Activated B cell treated with CpG ODN at 0.5 μM for 24 hours (primary cell): ENCODE measurements at regions of chr6 and their contacts with region 1.

Region 1: GRCh38 chr6:45714741-45715507 is 300.7 kb downstream of the CLIC5 start:
- DNase-seq: no peak
- ATAC-seq: peak; percentile 40
- H3K4me3 Mint-ChIP-seq: no peak overlapping the region
- H3K27ac Mint-ChIP-seq: no peak overlapping the region
- H3K4me1 Mint-ChIP-seq: peaks cover 29% of the 10 kb centered on the region
- H3K27me3 Mint-ChIP-seq: no peaks in the 10 kb centered on the region
- CTCF ChIP-seq: no peak

Region 2: DNA sequence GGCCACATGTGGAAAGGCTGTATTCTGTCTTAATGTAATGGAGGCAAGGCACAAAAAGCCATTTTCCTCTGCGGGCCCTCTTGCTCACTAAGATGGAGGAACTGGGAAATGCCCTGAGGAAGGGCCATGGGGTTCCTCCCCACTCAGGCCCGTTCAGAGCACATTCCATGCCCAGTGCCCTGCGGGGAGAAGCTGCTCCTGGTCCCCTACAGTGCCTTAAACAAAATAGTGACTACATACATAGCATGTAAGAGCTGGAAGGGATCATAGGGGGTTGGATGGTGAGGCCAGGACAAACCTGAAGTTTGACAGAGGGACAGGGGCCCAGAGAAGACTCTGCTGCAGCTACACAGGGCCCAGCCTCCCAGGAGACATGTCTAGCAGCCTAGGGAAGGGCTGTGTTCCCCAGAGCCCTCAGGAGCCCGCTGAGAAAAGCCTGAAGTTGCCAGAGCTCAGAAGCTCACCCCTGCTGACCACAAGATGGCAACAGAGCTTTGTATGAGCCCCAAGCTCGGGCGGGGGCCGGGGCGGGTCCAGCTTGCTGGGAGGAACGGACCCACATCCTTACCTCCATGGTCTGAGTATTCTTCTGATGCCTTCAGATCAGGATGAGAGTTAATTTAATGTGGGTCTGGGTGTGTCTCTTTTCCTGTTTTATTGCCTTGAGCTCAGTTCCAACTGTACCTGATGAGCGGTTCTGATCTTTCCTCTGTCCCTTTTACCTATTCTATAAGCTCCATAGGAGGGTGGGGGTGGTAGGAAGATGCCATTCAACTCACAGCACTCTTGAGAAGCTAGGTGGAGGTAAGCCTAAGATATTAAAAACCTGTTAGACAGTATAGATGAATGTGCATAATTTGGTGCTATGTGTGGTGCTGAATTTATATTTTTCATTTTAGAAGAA is 1084.5 kb before region 1 on chr6:
- CTCF ChIA-PET with region 1: interaction called, 12 read pairs
- POLR2A ChIA-PET with region 1: no interaction called
- intact Hi-C with region 1: no loop called
- DNase-seq: no peak
- ATAC-seq: no peak
- H3K4me3 Mint-ChIP-seq: no peak overlapping the region
- H3K27ac Mint-ChIP-seq: no peak overlapping the region
- H3K4me1 Mint-ChIP-seq: peaks cover 2% of the 10 kb centered on the region
- H3K27me3 Mint-ChIP-seq: peaks cover 10% of the 10 kb centered on the region
- CTCF ChIP-seq: no peak

Region 3: DNA sequence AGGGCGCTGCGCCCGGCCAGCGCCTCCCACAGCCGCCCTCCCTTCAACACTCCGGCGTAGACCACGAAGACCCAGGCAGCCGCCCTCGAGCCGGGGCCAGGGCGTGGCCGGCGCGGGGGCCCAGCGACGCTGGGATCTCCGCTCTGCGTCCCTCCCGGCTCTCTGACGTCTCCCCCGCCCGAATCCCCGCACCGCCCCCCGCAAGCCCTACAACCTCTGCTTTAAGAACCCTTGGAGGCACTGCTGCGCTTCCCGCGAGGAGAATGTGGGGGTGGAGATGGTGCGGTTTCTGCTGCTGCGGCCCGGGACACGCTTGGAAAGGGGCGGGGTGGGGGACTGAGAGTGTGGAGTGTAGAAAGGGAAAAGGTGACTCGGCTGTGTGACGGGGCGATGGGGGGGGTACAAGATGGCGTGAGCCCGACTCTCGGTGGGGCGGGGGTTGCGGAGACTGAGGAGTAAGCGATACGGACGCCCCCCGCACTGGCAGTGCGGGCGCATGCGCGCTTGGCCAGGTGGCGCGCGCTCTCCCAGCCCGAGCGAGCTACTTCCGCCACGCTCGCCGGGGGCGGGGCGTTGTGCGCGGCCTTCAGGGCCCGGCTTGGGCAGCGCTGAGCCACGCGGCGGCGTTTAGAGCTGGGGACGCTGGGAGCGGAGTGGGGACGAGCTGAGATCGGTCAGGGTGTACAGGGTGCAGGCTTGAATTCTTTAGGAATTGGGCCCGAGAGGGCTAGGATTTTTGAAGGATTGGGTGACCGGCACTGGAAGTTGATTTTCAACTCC is 337.2 kb before region 1 on chr6 and contains the start of gene SUPT3H:
- CTCF ChIA-PET with region 1: interaction called, 11 read pairs
- POLR2A ChIA-PET with region 1: interaction called, 9 read pairs
- intact Hi-C with region 1: loop called (anchors 1 kb)
- DNase-seq: peak; percentile 91
- ATAC-seq: peak; percentile 79
- H3K4me3 Mint-ChIP-seq: peak within 1 kb of the TSS; percentile 99
- H3K27ac Mint-ChIP-seq: peak within 1 kb of the TSS; percentile 99
- H3K4me1 Mint-ChIP-seq: peaks cover 26% of the 10 kb centered on the region
- H3K27me3 Mint-ChIP-seq: no peaks in the 10 kb centered on the region
- CTCF ChIP-seq: no peak
- total RNA-seq, gene SUPT3H: 9.9 and 10.4 TPM in 2 replicates

Region 4: DNA sequence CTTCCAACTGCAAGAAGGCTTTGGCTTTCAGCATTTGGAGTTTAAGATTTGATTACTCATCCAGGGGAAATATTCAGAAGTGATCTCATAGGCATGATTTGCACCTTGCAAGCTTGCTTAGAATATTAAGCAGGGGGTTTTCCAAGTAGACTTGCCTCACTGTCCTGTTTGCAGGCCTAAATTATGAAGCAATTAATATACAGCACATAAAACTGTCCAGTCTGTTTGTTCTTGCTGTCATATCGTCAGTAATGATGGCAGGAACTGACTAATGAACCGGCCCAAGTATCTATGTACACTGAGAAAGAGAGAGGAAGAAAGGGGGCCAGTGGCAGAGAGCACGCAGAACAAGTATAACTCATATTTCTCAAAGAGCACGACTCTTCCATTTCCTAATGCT is 124.7 kb before region 1 on chr6:
- CTCF ChIA-PET with region 1: no interaction called
- POLR2A ChIA-PET with region 1: no interaction called
- intact Hi-C with region 1: loop called (anchors 10 kb)
- DNase-seq: no peak
- ATAC-seq: no peak
- H3K4me3 Mint-ChIP-seq: no peak overlapping the region
- H3K27ac Mint-ChIP-seq: no peak overlapping the region
- H3K4me1 Mint-ChIP-seq: peaks cover 25% of the 10 kb centered on the region
- H3K27me3 Mint-ChIP-seq: no peaks in the 10 kb centered on the region
- CTCF ChIP-seq: no peak

Region 5: DNA sequence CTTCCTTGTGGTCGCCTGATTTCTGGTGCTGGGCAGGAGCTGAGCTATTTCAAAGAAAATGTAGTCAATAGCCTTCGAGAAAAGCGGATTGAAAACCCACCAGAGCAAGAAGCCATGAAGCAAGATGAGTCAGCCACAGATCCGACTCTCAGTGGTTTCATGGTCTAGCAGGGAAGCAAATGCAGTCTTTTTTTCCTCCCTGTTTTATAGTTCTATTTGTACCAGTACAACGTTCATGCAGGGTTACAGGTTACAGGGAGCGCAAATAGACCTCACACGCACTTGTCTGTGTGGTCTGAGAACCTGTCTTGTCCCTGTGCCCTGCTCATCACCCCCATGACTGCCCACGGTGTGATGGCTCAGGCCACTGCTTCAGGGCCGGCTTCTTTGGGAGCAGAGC is 27.4 kb before region 1 on chr6:
- CTCF ChIA-PET with region 1: no interaction called
- POLR2A ChIA-PET with region 1: interaction called, 3 read pairs
- intact Hi-C with region 1: loop called (anchors 1 kb)
- DNase-seq: no peak
- ATAC-seq: peak; percentile 88
- H3K4me3 Mint-ChIP-seq: peak overlapping the region; percentile 3
- H3K27ac Mint-ChIP-seq: no peak overlapping the region
- H3K4me1 Mint-ChIP-seq: peaks cover 25% of the 10 kb centered on the region
- H3K27me3 Mint-ChIP-seq: peaks cover 2% of the 10 kb centered on the region
- CTCF ChIP-seq: no peak

Region 6: DNA sequence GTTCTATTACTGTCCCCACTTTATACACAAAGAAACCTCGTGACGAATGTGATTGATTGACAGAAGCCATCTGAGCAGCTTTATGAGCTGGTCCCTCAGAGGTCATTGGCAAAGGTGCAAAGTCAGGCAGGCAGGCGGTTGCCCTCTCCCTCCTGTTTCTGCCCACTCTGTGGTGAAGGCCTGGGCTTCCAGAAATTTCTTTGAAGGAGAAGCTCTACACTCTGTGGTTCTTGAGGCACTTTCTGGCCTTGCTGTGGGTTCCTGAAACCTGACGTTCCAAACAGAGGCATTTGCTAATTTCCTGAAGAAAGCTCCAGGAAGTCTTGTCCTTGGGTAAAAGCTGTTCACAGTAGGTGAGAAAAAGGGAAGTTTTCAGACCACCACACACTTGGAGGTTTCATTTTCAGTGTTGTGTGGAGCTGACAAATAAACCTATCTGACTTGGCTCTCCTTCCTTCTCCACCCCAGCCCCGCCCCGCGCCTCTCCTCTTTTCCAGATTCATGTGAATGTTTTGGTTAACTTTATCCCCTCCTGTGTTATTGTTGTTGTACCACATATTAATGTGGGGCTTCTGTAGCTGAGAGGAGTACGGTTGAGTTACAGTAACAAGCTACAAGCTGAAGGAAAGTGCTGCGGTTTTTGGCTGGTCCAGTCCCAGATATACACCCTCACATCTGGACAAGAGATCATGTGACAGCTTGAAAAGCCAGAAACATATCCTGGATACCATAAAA is 26.7 kb after region 1 on chr6:
- CTCF ChIA-PET with region 1: no interaction called
- POLR2A ChIA-PET with region 1: no interaction called
- intact Hi-C with region 1: no loop called
- DNase-seq: no peak
- ATAC-seq: peak; percentile 66
- H3K4me3 Mint-ChIP-seq: peak overlapping the region; percentile 50
- H3K27ac Mint-ChIP-seq: peak overlapping the region; percentile 81
- H3K4me1 Mint-ChIP-seq: peaks cover 27% of the 10 kb centered on the region
- H3K27me3 Mint-ChIP-seq: no peaks in the 10 kb centered on the region
- CTCF ChIP-seq: no peak